Heart right ventricle (tissue), 16 donors: ENCODE measurements at regions of chr2 and their contacts with region 1.

Region 1: DNA sequence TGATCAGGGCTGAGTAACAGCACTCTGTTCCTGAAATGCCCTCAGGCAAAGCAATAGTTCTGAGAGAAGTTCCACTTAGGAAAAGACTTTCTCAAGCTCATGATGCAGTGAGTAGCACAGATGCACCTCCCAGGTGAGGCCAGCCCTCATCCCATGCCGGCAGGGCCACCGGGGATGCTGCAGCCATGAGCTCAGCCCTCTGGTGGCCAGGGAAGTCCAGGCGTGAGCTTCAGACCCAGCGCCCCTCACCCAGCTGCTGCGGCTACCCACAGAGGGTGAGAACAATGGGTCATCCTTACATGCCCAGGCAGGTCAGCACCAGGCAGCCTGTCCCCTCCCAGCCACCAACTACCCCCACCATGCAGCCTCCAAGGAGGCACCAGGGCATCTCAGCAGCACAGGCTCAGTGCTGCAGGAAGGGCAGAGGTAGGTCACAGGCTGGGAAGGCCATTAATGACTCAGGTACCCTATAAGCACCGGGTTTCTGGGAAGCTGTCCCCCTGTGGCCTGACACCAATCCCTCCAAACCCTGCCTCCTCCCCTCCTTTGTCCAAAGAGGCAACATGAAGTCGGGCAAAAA is 50.6 kb downstream of the TTC32 start:
- DNase-seq: no peak
- ATAC-seq: no peak
- H3K4me3 ChIP-seq: no peak overlapping the region
- H3K27ac ChIP-seq: no peak overlapping the region
- H3K4me1 ChIP-seq: peaks cover 0 to 7% (median 0%) of the 10 kb centered on the region in 9 donors
- H3K27me3 ChIP-seq: no peaks in the 10 kb centered on the region
- CTCF ChIP-seq: no peak

Region 2: DNA sequence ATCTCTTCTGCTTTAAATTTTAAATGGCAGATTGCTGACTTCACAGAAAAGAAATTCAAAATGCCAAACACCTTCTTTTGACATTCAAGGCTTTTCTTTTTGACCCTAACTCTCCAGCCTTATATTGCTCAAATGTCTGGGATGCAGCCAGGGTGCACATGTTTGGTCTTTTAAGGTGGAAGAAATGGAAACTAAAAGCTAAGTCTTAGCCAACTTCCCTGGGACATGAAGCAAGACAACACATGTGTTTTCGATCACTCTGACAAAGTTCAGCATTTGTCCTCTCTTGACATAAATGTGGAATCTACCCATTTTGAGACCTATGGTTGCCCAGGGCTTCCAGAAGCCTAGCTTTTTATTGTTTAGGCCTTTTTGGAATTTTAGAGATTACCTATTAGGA is 1452.4 kb before region 1 on chr2:
- intact Hi-C with region 1: loop called in 1 of 10 experiments (anchors 10 kb)
- DNase-seq: no peak
- ATAC-seq: peak in 1 of 8 donors; percentile 29
- H3K4me3 ChIP-seq: no peak overlapping the region
- H3K27ac ChIP-seq: no peak overlapping the region
- H3K4me1 ChIP-seq: no peaks in the 10 kb centered on the region
- H3K27me3 ChIP-seq: no peaks in the 10 kb centered on the region
- CTCF ChIP-seq: no peak

Region 3: GRCh38 chr2:18749912-18750526 is 1101.2 kb before region 1 on chr2:
- intact Hi-C with region 1: loop called in 1 of 10 experiments (anchors 5 kb)
- DNase-seq: peak in 1 of 2 donors; percentile 67
- ATAC-seq: peak in 2 of 8 donors; percentile 37 to 38
- H3K4me3 ChIP-seq: no peak overlapping the region
- H3K27ac ChIP-seq: no peak overlapping the region
- H3K4me1 ChIP-seq: peaks cover 0 to 15% (median 0%) of the 10 kb centered on the region in 9 donors
- H3K27me3 ChIP-seq: no peaks in the 10 kb centered on the region
- CTCF ChIP-seq: peak; percentile 55 to 87 (median 80)

Region 4: DNA sequence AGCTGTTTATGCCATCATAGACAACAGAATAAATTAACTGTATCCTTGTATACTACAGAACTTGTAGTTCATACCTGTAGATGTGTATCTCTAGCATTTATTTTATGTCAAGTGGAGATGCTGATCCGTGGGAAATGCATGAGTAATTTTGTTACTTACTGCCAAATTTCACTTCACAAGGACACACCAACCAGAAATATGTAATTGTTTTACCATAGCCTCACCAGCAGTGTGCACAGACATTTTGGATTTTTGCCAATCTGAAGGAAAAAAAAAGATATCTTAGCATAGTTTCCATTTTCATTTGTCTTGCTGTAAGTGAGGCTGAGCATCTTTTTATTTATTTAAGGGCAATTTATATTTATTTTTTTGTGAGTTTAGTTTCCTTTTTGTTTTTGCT is 227.7 kb before region 1 on chr2:
- intact Hi-C with region 1: no loop called
- DNase-seq: no peak
- ATAC-seq: peak in 2 of 8 donors; percentile 50 to 79
- H3K4me3 ChIP-seq: no peak overlapping the region
- H3K27ac ChIP-seq: peak overlapping the region in 1 of 10 donors; percentile 14
- H3K4me1 ChIP-seq: peaks cover 0 to 4% (median 0%) of the 10 kb centered on the region in 9 donors
- H3K27me3 ChIP-seq: no peaks in the 10 kb centered on the region
- CTCF ChIP-seq: no peak

Region 5: GRCh38 chr2:19754907-19755306 is 96.3 kb before region 1 on chr2:
- intact Hi-C with region 1: loop called in 1 of 10 experiments (anchors 10 kb)
- DNase-seq: no peak
- ATAC-seq: no peak
- H3K4me3 ChIP-seq: no peak overlapping the region
- H3K27ac ChIP-seq: no peak overlapping the region
- H3K4me1 ChIP-seq: peaks cover 0 to 17% (median 5%) of the 10 kb centered on the region in 9 donors
- H3K27me3 ChIP-seq: no peaks in the 10 kb centered on the region
- CTCF ChIP-seq: no peak

Region 6: DNA sequence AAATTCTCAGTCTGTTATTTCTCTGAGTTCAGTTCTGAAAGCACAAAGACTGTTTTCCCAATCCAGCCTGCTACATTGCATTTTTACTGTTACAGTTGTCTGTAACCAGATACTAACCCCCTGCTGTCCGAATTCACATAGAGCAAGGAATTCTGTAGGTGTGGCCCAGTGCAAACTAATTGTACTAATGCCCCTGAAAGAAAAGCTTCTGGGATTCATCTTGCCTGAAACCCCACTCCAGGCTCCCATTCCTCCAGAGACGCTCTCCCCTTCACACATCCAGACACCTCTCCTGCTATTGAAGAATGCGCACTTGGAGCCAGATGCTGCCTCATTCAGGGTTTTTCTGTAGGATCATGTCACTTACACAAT is 76.4 kb before region 1 on chr2:
- intact Hi-C with region 1: loop called in 1 of 10 experiments (anchors 10 kb)
- DNase-seq: no peak
- ATAC-seq: no peak
- H3K4me3 ChIP-seq: no peak overlapping the region
- H3K27ac ChIP-seq: no peak overlapping the region
- H3K4me1 ChIP-seq: peaks cover 0 to 33% (median 6%) of the 10 kb centered on the region in 9 donors
- H3K27me3 ChIP-seq: no peaks in the 10 kb centered on the region
- CTCF ChIP-seq: no peak